Activated T-helper 1 cell treated with anti-CD3 and anti-CD28 coated beads, Interleukin-12 subunit alpha, Interleukin-12 subunit beta, Interleukin-2, Interleukin-4 antibody, amounts not matched to agents 30 ng/mL and 10 ng/mL and 1 ng/mL, durations not matched to agents 14 hours and 24 hours and 36 hours (primary cell): ENCODE measurements at regions of chr12 and their contacts with region 1.

Region 1: DNA sequence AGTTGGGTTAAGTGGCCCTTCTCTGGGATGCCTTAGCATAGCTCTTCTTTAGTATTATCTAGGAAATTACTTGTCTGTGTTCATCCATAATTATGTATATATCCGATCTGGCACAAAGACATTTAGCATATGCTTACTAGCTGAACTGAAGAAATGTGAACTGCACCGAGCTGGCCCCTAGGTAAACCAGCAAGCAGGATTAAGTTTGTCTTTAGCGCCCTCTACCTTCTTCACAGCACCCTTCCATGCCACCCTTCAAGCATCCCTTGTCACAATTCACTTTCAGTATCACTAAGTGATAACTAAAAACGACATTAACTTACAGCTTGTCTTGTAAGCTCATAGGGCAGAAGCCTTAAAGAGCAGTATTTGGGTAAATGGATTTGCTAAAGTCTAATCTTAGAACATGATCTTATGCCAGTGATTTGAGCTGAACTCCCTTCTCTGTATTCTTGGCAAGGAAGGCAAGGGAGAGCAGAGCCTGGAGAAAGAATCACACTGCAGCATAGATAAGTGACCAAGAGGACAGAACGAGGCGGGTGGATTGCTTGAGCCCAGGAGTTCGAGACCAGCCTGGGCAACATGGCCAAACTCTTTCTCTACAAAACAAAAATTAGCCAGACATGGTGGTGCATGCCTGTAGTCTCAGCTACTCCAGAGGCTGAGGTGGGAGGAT is 2.6 kb upstream of the HAL start:
- DNase-seq: peak; percentile 42
- H3K4me3 Mint-ChIP-seq: no peak overlapping the region
- H3K27ac Mint-ChIP-seq: peak overlapping the region; percentile 20
- H3K4me1 Mint-ChIP-seq: peaks cover 18% of the 10 kb centered on the region
- H3K27me3 Mint-ChIP-seq: no peaks in the 10 kb centered on the region

Region 2: DNA sequence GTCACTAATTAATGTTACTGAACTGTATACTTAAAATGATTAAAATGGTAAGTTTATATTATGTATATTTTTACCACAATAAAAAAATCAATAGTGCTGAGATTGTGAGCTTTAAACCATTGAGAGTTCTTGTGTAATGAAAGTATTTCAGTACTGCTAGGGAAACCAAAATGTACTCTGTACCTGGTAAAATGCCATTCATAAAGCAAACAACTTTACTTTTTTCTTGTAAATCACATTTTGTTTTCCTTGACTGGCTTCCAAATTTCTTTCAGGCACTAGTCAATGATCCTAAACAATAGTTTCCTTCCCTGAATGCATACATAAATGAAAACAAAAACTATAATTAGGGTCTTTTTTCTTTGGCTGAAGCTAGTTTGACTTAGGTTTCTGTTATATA is 169.4 kb before region 1 on chr12:
- intact Hi-C with region 1: loop called (anchors 5 kb)
- DNase-seq: no peak
- H3K4me3 Mint-ChIP-seq: no peak overlapping the region
- H3K27ac Mint-ChIP-seq: no peak overlapping the region
- H3K4me1 Mint-ChIP-seq: no peaks in the 10 kb centered on the region
- H3K27me3 Mint-ChIP-seq: peaks cover 15% of the 10 kb centered on the region

Region 3: GRCh38 chr12:95918194-95918993 is 80.4 kb before region 1 on chr12:
- intact Hi-C with region 1: loop called (anchors 1 kb)
- DNase-seq: peak; percentile 17
- H3K4me3 Mint-ChIP-seq: no peak overlapping the region
- H3K27ac Mint-ChIP-seq: no peak overlapping the region
- H3K4me1 Mint-ChIP-seq: no peaks in the 10 kb centered on the region
- H3K27me3 Mint-ChIP-seq: peaks cover 20% of the 10 kb centered on the region